Breast epithelium (tissue), 4 donors: ENCODE measurements at regions of chr11 and their contacts with region 1.

Region 1: DNA sequence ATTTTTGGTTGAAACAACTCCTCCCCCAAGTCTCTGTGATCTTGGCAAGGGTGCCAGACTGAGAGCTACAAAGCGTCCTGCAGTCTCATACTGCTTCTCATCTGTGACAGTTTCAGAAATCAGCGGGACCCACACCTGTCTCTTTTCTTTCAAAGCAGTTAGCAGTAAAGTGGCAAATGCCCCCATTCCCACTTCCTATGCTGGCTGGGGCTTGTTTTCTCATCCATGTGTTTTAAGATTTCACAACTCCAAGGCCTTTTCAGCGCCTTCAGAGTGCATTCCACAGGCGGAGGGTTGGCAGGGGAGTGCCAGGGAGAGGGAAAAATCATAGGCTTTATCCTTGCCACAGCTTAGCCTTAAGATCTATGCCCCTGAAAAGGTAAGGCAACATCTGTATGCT is 493.5 kb downstream of the OPCML start:
- DNase-seq: no peak
- H3K4me3 ChIP-seq: no peak overlapping the region
- H3K27ac ChIP-seq: no peak overlapping the region
- H3K4me1 ChIP-seq: no peaks in the 10 kb centered on the region
- H3K27me3 ChIP-seq: peaks cover 0 to 11% of the 10 kb centered on the region in 2 donors
- CTCF ChIP-seq: no peak
- POLR2A ChIP-seq: no peak

Region 2: GRCh38 chr11:131748151-131749050 is 1290.4 kb before region 1 on chr11:
- intact Hi-C with region 1: loop called (anchors 10 kb)
- DNase-seq: peak in 1 of 2 donors; percentile 20
- H3K4me3 ChIP-seq: no peak overlapping the region
- H3K27ac ChIP-seq: no peak overlapping the region
- H3K4me1 ChIP-seq: no peaks in the 10 kb centered on the region
- H3K27me3 ChIP-seq: peaks cover 0 to 7% of the 10 kb centered on the region in 2 donors
- CTCF ChIP-seq: peak in 2 of 3 donors; percentile 47 to 55
- POLR2A ChIP-seq: no peak

Region 3: DNA sequence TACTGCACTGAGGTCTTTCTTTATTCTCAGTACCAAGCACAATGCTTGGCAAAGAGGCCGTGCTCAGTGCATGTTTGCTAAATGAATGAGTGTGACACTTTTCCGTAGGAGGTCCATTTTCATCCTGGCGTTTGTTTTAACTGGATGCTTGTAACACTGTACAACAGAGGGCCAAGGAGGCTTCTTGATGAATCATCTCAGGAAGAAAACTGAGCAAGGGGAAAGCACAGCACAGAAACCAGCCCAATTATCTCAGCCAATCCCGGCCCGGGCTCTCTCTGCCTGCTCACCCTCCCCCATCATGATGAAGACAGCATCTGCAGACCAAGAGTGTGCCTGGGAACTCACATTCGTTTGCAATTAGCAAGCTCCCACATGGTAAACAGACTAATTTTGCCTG is 76.8 kb before region 1 on chr11:
- intact Hi-C with region 1: no loop called
- DNase-seq: no peak
- H3K4me3 ChIP-seq: no peak overlapping the region
- H3K27ac ChIP-seq: no peak overlapping the region
- H3K4me1 ChIP-seq: no peaks in the 10 kb centered on the region
- H3K27me3 ChIP-seq: no peaks in the 10 kb centered on the region
- CTCF ChIP-seq: no peak
- POLR2A ChIP-seq: no peak

Region 4: GRCh38 chr11:133078591-133079404 is 39.9 kb after region 1 on chr11:
- intact Hi-C with region 1: no loop called
- DNase-seq: no peak
- H3K4me3 ChIP-seq: no peak overlapping the region
- H3K27ac ChIP-seq: no peak overlapping the region
- H3K4me1 ChIP-seq: no peaks in the 10 kb centered on the region
- H3K27me3 ChIP-seq: peaks cover 0 to 36% of the 10 kb centered on the region in 2 donors
- CTCF ChIP-seq: peak; percentile 8 to 39 (median 26)
- POLR2A ChIP-seq: no peak